Naive thymus-derived CD4-positive, alpha-beta T cell (primary cell): ENCODE measurements at regions of chr22 and their contacts with region 1.

Region 1: DNA sequence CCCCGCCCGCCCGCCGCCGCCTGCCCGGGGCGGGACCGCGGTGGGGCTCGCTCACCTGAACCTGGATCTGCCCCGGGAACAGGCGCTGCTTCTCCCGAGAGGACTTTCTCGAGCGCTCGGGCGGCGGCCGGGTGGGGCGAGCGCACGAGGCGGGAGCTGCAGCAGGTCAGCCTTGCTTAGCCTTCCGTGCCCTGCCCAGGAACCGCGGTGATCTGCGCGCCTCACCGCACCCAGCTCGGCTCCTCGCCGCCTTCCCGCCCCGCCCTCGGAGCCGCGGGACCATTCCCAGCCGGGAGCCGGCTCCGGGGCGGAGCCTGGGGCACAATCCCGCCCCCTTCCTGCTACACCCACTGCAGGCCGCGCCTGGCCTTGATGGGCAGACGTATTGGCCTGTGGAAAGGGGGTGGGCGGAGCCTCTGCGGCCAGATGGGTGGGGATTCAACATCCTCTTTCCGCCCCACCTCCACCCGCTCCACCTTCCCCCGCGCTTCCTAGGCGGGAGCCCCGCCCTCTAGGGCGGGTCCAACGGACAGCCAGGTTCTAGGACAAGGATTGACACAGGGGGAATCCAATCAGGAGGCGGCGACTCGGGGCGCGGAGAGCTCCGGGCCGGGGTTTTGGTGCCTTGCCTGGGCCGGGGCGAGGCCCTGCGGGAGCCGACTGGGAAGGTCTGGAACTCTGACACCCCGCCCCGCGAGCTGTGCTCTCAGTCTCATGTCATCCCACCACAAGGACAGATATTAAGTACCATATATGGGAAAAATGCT is at the start of gene MYH9:
- DNase-seq: peak; percentile 93 to 99 (median 99)
- ATAC-seq: peak; percentile 93
- H3K4me3 ChIP-seq: peak within 1 kb of the TSS; percentile 97
- H3K4me3 Mint-ChIP-seq: peak within 1 kb of the TSS; percentile 87 to 99 (median 93)
- H3K27ac ChIP-seq: peak within 1 kb of the TSS; percentile 86
- H3K27ac Mint-ChIP-seq: peak within 1 kb of the TSS; percentile 93 to 97 (median 94)
- H3K4me1 ChIP-seq: peaks cover 20 to 21% of the 10 kb centered on the region in 2 donors
- H3K4me1 Mint-ChIP-seq: peaks cover 18 to 48% (median 35%) of the 10 kb centered on the region in 7 donors
- H3K27me3 ChIP-seq: no peaks in the 10 kb centered on the region
- H3K27me3 Mint-ChIP-seq: no peaks in the 10 kb centered on the region
- total RNA-seq, gene MYH9: 650 to 900 (median 803) TPM

Region 2: DNA sequence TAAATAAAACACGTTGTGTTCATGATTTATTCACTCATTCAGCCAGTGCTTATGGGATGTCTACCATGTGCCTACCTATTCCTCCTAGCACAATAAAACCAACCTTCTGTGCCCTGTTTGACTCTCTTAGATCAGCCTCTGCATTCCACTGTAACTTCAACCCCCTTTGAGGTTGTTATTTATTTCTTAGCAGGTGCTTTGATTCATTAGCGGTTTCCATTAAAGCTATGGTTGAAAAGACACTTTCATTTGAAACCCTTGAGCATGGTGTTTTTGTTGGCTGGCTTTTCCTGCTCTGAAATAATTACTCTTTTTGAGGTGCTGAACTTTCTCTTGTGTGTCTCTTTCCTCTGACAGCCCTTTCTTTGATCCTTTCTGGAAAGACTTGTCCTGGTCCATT is 1897.0 kb before region 1 on chr22:
- CTCF ChIA-PET with region 1: no interaction called
- POLR2A ChIA-PET with region 1: no interaction called
- intact Hi-C with region 1: no loop called
- DNase-seq: no peak
- ATAC-seq: no peak
- H3K4me3 ChIP-seq: no peak overlapping the region
- H3K4me3 Mint-ChIP-seq: no peak overlapping the region
- H3K27ac ChIP-seq: no peak overlapping the region
- H3K27ac Mint-ChIP-seq: no peak overlapping the region
- H3K4me1 ChIP-seq: no peaks in the 10 kb centered on the region
- H3K4me1 Mint-ChIP-seq: no peaks in the 10 kb centered on the region
- H3K27me3 ChIP-seq: no peaks in the 10 kb centered on the region
- H3K27me3 Mint-ChIP-seq: peaks cover 0 to 10% (median 0%) of the 10 kb centered on the region in 5 donors

Region 3: GRCh38 chr22:36136475-36136874 is 251.5 kb before region 1 on chr22:
- CTCF ChIA-PET with region 1: no interaction called
- POLR2A ChIA-PET with region 1: no interaction called
- intact Hi-C with region 1: no loop called
- DNase-seq: no peak
- ATAC-seq: no peak
- H3K4me3 ChIP-seq: no peak overlapping the region
- H3K4me3 Mint-ChIP-seq: no peak overlapping the region
- H3K27ac ChIP-seq: no peak overlapping the region
- H3K27ac Mint-ChIP-seq: peak overlapping the region in 1 of 9 donors; percentile 59
- H3K4me1 ChIP-seq: peaks cover 0 to 10% of the 10 kb centered on the region in 2 donors
- H3K4me1 Mint-ChIP-seq: peaks cover 10 to 36% (median 22%) of the 10 kb centered on the region in 7 donors
- H3K27me3 ChIP-seq: no peaks in the 10 kb centered on the region
- H3K27me3 Mint-ChIP-seq: no peaks in the 10 kb centered on the region

Region 4: GRCh38 chr22:36311386-36312358 is 76.3 kb before region 1 on chr22:
- CTCF ChIA-PET with region 1: no interaction called
- POLR2A ChIA-PET with region 1: interaction called, 10 read pairs
- intact Hi-C with region 1: no loop called
- DNase-seq: no peak
- ATAC-seq: no peak
- H3K4me3 ChIP-seq: no peak overlapping the region
- H3K4me3 Mint-ChIP-seq: no peak overlapping the region
- H3K27ac ChIP-seq: no peak overlapping the region
- H3K27ac Mint-ChIP-seq: peak overlapping the region in 1 of 9 donors; percentile 72
- H3K4me1 ChIP-seq: no peaks in the 10 kb centered on the region
- H3K4me1 Mint-ChIP-seq: peaks cover 0 to 9% (median 4%) of the 10 kb centered on the region in 7 donors
- H3K27me3 ChIP-seq: no peaks in the 10 kb centered on the region
- H3K27me3 Mint-ChIP-seq: no peaks in the 10 kb centered on the region

Region 5: DNA sequence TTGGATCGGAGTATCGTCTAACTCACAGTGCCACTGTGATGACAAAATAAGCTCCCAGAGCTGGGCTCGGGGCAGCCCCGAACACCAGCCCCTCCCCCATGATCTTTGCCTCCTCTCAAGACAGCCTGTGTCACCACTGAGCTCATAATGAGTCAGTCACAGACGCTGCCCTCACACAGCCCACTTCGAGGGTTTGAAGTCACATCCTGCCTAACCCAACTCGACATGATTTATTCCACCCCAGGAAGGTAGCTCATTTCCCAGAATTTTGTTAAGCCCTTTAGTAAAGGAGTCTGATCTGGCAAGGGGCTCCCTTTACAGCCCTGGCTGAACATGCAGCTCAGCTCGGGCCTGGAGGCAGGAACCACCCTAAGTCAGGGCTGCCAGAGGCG is 22.9 kb before region 1 on chr22:
- CTCF ChIA-PET with region 1: interaction called, 3 read pairs
- POLR2A ChIA-PET with region 1: interaction called, 1,512 read pairs
- intact Hi-C with region 1: loop called in 1 of 2 experiments (anchors 1 kb)
- DNase-seq: peak; percentile 55 to 98 (median 83)
- ATAC-seq: peak; percentile 97
- H3K4me3 ChIP-seq: no peak overlapping the region
- H3K4me3 Mint-ChIP-seq: peak overlapping the region; percentile 58 to 88 (median 82)
- H3K27ac ChIP-seq: peak overlapping the region; percentile 93
- H3K27ac Mint-ChIP-seq: peak overlapping the region; percentile 91 to 98 (median 96)
- H3K4me1 ChIP-seq: peaks cover 97 to 98% of the 10 kb centered on the region in 2 donors
- H3K4me1 Mint-ChIP-seq: peaks cover 73 to 100% (median 95%) of the 10 kb centered on the region in 7 donors
- H3K27me3 ChIP-seq: no peaks in the 10 kb centered on the region
- H3K27me3 Mint-ChIP-seq: no peaks in the 10 kb centered on the region

Region 6: DNA sequence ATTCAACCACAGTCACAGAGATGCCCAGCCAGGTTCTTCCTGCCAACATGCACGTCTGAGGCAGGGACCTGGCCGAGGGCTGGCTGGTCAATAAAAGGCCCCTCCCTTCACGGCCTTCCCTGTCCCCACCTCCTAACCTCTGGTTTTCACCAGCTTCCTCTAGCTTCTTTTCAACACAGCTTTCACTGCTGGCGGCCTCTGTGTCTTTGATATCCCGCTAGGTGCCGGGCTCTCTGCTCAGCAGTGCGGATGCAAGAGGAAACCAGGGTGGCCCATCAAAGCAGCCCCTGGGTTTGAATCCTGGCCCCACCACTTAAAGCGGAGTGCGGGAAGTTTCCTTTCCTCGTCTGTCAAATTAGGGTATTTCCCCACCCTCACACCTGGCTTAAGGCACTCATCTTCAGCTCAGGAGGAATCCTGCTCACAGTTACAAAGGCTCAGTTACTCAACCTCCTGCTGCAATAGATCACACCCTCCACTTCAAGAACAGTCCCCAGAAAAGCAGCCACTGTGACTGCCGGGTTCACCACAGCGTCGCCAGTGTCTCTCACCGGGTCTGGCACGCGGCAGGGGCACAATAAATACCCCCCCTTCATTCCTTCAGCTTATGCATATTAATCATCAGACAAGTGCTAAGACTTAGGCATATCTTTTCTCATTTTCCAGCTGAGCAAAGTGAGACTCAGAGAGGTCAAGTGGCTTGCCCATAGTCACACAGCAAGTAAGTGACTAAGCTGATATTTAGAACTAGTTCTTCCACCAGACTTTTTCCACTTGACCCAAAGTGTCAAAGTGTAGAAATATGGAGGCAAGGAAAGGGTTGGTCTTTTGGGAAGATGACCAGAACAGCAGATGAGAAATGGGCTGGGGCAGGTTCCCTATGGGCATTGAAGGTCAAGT is 47.8 kb after region 1 on chr22:
- CTCF ChIA-PET with region 1: no interaction called
- POLR2A ChIA-PET with region 1: interaction called, 7 read pairs
- intact Hi-C with region 1: loop called in 1 of 2 experiments (anchors 1 kb)
- DNase-seq: peak; percentile 35 to 89 (median 76)
- ATAC-seq: peak; percentile 93
- H3K4me3 ChIP-seq: peak overlapping the region; percentile 6
- H3K4me3 Mint-ChIP-seq: peak overlapping the region; percentile 61 to 82 (median 72)
- H3K27ac ChIP-seq: peak overlapping the region; percentile 60
- H3K27ac Mint-ChIP-seq: peak overlapping the region; percentile 83 to 96 (median 91)
- H3K4me1 ChIP-seq: peaks cover 20 to 21% of the 10 kb centered on the region in 2 donors
- H3K4me1 Mint-ChIP-seq: peaks cover 21 to 47% (median 32%) of the 10 kb centered on the region in 7 donors
- H3K27me3 ChIP-seq: no peaks in the 10 kb centered on the region
- H3K27me3 Mint-ChIP-seq: no peaks in the 10 kb centered on the region

Region 7: DNA sequence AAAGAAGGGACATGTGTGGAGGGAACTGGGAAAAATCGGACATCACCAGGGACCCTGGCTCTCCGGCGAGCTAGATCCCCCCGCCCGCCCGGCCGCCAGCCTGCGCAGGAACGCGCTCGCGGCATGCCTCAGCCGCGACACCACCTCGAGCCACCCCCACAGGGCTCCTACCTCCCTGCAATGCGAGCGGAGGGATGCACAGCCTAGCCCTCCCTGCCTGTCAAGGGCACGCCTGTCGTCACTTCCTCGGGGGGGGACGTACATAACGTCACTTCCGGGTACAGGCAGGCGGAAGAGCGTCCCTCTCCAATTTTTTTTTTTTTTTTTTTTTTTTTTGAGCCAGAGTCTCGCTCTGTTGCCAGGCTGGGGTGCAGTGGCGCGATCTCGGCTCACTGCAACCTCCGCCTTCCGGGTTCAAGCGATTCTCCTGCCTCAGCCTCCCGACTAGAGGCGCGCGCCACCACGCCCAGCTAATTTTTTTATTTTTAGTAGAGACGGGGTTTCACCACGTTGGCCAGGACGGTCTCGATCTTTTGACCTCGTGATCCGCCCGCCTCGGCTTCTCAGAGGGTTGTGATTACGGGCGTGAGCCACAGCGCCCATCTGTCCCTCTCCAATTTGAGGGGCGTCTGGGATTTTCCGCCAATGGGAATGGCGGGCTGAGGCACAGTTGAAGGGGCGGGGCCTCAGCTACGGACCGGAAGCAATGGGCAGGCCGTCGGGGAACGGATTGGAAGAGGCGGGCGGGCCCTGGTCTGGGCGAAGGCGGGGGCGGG is 93.6 kb after region 1 on chr22 and contains the start of gene TXN2:
- CTCF ChIA-PET with region 1: no interaction called
- POLR2A ChIA-PET with region 1: interaction called, 5 read pairs
- intact Hi-C with region 1: loop called (anchors 1 kb)
- DNase-seq: peak; percentile 91 to 99 (median 98)
- ATAC-seq: peak; percentile 90
- H3K4me3 ChIP-seq: peak within 1 kb of the TSS; percentile 55
- H3K4me3 Mint-ChIP-seq: peak within 1 kb of the TSS; percentile 90 to 100 (median 96)
- H3K27ac ChIP-seq: peak within 1 kb of the TSS; percentile 96
- H3K27ac Mint-ChIP-seq: peak within 1 kb of the TSS; percentile 78 to 99 (median 95)
- H3K4me1 ChIP-seq: peaks cover 8 to 15% of the 10 kb centered on the region in 2 donors
- H3K4me1 Mint-ChIP-seq: peaks cover 15 to 30% (median 18%) of the 10 kb centered on the region in 7 donors
- H3K27me3 ChIP-seq: no peaks in the 10 kb centered on the region
- H3K27me3 Mint-ChIP-seq: peaks cover 0 to 2% (median 0%) of the 10 kb centered on the region in 5 donors
- total RNA-seq, gene TXN2: 35.5 to 69.9 (median 37.7) TPM